ENCODE measurements at regions of chr11 and their contacts with region 1.

Region 1: GRCh38 chr11:10857709-10858438 is at the start of gene ZBED5:
- DNase-seq: peak; percentile 97
- H3K4me3 Mint-ChIP-seq: peak within 1 kb of the TSS; percentile 87
- H3K27ac Mint-ChIP-seq: peak within 1 kb of the TSS; percentile 97
- H3K4me1 Mint-ChIP-seq: peaks cover 6% of the 10 kb centered on the region
- H3K27me3 Mint-ChIP-seq: no peaks in the 10 kb centered on the region
- CTCF ChIP-seq: no peak
- total RNA-seq, gene ZBED5: 38.9 and 53.3 TPM in 2 replicates

Region 2: DNA sequence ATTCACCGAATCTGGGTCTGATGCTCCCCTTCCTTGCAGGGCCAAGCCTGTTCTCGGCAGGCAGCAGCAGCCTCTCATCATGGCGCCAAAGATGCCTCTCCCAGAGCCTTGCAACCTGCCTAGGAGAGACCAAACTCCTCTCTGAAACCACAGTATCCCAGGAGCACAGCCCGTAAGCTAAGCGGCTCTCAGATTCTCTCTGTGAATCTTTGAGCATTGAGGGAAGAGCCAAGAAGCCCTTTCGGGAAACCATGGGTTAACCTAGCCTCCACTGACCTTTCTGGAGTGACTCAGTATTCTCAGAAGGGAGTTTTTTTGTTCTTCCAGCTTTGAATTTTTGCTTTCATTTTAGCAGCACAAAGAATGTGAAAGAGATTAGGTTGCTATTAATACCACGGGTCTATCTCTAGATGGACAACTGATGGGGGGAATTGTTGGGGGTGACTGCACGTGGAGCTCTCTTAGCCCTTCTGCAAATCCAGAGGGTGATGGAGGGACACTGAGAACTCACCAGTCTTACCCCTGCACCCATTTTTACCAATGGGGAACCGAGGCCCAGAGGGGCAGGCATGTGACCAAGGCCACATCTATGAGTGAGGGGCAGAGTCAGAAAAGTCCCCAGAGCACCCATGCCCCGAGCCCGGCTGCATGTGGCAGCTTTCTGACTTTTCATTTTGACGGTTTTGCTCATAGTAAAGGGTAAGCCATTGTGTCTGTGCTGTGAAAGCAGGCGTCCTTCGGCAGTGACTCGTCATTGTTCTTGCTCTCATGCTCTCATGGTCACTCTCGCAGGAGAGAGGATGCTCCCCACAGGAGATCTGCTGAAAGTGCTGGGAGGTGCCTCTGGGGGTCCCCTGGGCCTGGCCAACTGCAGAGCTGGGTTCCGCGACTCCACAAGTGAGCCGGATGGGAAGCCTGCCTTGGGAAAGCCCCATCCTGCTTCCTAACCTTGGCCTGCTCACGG is 200.3 kb before region 1 on chr11:
- CTCF ChIA-PET with region 1: no interaction called
- POLR2A ChIA-PET with region 1: no interaction called
- intact Hi-C with region 1: no loop called
- DNase-seq: no peak
- H3K4me3 Mint-ChIP-seq: no peak overlapping the region
- H3K27ac Mint-ChIP-seq: no peak overlapping the region
- H3K4me1 Mint-ChIP-seq: peaks cover 12% of the 10 kb centered on the region
- H3K27me3 Mint-ChIP-seq: no peaks in the 10 kb centered on the region
- CTCF ChIP-seq: no peak

Region 3: DNA sequence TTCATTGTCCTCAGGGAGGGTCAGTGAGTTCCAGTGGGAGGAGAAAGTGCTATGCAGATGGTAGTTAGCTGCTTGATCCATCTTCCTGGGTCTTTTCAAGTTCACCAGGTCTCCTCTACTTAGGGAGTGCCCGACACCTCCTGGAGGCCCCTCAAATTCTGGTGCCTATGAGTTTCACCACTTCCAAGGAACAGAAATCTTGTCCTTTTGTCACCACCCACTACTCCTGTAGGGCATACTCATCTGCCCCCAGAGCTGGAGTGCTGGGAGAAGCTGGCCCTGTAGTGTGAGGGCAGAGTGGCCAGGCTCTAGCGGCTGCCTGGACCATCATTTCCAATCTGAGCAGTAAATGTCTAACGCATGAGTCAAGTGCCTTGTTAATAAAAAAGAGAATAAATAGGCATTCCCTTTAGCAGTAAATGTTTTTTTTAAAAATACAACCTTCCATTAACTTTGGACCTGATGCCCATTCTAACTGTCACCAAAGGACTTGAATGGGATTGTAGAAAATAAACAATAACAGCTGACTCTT is 176.9 kb before region 1 on chr11:
- CTCF ChIA-PET with region 1: no interaction called
- POLR2A ChIA-PET with region 1: no interaction called
- intact Hi-C with region 1: no loop called
- DNase-seq: no peak
- H3K4me3 Mint-ChIP-seq: no peak overlapping the region
- H3K27ac Mint-ChIP-seq: no peak overlapping the region
- H3K4me1 Mint-ChIP-seq: no peaks in the 10 kb centered on the region
- H3K27me3 Mint-ChIP-seq: peaks cover 38% of the 10 kb centered on the region
- CTCF ChIP-seq: no peak

Region 4: DNA sequence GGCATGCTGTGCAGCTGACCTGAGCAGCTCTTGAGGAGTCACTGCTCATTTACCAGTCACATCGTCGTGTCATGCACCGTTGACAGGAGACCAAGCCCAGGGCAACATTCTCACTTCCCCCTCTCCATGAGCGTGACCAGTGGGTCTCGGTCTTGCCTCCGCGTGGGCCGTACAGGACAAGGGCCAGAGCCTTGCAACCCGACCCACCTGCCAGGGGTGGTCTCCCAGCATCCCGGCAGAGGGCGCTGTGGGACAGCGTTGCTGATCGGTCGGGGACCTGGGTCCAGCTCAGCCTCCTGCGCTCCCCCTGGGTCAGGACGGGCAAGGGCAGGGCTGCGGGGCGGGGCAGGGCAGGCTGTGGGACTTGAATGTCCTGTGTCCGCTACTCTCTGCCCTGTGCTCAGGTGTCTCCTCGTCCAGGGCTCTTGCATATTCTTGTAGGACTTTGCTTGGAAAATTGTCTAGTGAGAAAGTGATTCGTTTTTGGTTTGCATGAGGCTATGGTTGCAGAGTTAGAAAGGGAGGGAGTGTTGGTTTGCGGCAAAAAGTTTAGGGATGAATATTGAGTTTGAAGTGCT is 65.4 kb before region 1 on chr11:
- CTCF ChIA-PET with region 1: interaction called, 4 read pairs
- POLR2A ChIA-PET with region 1: interaction called, 14 read pairs
- intact Hi-C with region 1: no loop called
- DNase-seq: peak; percentile 88
- H3K4me3 Mint-ChIP-seq: no peak overlapping the region
- H3K27ac Mint-ChIP-seq: no peak overlapping the region
- H3K4me1 Mint-ChIP-seq: peaks cover 8% of the 10 kb centered on the region
- H3K27me3 Mint-ChIP-seq: no peaks in the 10 kb centered on the region
- CTCF ChIP-seq: peak; percentile 96

Region 5: DNA sequence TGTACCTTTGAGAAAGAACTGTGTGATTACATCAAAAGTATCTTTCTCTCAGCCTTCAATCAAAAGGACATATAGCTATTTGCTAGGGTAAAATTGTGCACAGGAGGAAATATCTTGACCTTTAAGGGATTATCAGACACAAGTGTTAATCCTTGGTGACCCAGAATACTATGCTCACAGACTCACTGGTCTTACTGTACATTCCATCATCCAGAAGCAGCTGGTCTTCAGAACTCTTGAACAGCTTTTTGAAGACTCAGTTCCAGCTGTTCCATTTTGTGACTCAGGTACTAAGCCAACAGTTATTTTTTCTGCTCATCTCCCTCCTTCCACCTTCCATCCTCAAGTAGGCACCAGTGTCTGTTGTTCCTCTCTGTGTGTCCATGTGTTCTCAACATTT is 19.8 kb before region 1 on chr11:
- CTCF ChIA-PET with region 1: no interaction called
- POLR2A ChIA-PET with region 1: interaction called, 34 read pairs
- intact Hi-C with region 1: no loop called
- DNase-seq: no peak
- H3K4me3 Mint-ChIP-seq: no peak overlapping the region
- H3K27ac Mint-ChIP-seq: no peak overlapping the region
- H3K4me1 Mint-ChIP-seq: no peaks in the 10 kb centered on the region
- H3K27me3 Mint-ChIP-seq: no peaks in the 10 kb centered on the region
- CTCF ChIP-seq: no peak

Region 6: GRCh38 chr11:10885703-10886363 is 28.0 kb after region 1 on chr11:
- CTCF ChIA-PET with region 1: no interaction called
- POLR2A ChIA-PET with region 1: interaction called, 16 read pairs
- intact Hi-C with region 1: no loop called
- DNase-seq: no peak
- H3K4me3 Mint-ChIP-seq: no peak overlapping the region
- H3K27ac Mint-ChIP-seq: no peak overlapping the region
- H3K4me1 Mint-ChIP-seq: no peaks in the 10 kb centered on the region
- H3K27me3 Mint-ChIP-seq: no peaks in the 10 kb centered on the region
- CTCF ChIP-seq: no peak

Region 7: GRCh38 chr11:10911907-10912306 is 54.0 kb after region 1 on chr11:
- CTCF ChIA-PET with region 1: interaction called, 6 read pairs
- POLR2A ChIA-PET with region 1: interaction called, 34 read pairs
- intact Hi-C with region 1: no loop called
- DNase-seq: no peak
- H3K4me3 Mint-ChIP-seq: no peak overlapping the region
- H3K27ac Mint-ChIP-seq: no peak overlapping the region
- H3K4me1 Mint-ChIP-seq: peaks cover 26% of the 10 kb centered on the region
- H3K27me3 Mint-ChIP-seq: no peaks in the 10 kb centered on the region
- CTCF ChIP-seq: no peak

Region 8: DNA sequence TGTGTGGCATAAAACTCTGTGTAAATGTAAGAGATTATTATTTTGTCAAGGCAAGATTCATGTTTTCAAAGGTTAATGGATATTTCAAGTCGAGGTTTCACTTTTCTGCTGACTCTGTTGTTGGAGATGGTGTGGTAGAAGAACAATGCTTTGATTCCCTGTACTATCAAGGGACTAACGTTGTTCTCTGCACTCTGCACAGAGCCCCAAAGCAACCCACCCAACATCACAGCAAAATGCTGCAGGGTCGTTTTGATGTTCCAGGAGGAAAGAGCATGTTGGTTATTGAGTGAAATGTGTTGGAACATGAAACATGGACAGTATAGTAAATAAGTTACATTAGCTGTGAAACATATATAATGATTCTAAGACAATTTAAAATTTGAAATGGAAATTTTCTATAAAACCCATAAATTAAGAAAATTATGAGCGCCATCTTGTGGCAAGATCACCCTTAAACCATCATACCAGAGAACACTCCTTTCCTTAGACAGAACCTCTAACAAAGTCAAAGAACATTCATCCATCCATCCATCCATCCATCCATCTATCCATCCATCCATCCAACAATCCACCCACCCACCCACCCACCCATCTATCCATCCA is 164.4 kb after region 1 on chr11:
- CTCF ChIA-PET with region 1: no interaction called
- POLR2A ChIA-PET with region 1: interaction called, 4 read pairs
- intact Hi-C with region 1: loop called (anchors 5 kb)
- DNase-seq: peak; percentile 36
- H3K4me3 Mint-ChIP-seq: no peak overlapping the region
- H3K27ac Mint-ChIP-seq: no peak overlapping the region
- H3K4me1 Mint-ChIP-seq: peaks cover 9% of the 10 kb centered on the region
- H3K27me3 Mint-ChIP-seq: no peaks in the 10 kb centered on the region
- CTCF ChIP-seq: peak; percentile 46